Naive thymus-derived CD4-positive, alpha-beta T cell (primary cell): ENCODE measurements at regions of chr14 and their contacts with region 1.

Region 1: DNA sequence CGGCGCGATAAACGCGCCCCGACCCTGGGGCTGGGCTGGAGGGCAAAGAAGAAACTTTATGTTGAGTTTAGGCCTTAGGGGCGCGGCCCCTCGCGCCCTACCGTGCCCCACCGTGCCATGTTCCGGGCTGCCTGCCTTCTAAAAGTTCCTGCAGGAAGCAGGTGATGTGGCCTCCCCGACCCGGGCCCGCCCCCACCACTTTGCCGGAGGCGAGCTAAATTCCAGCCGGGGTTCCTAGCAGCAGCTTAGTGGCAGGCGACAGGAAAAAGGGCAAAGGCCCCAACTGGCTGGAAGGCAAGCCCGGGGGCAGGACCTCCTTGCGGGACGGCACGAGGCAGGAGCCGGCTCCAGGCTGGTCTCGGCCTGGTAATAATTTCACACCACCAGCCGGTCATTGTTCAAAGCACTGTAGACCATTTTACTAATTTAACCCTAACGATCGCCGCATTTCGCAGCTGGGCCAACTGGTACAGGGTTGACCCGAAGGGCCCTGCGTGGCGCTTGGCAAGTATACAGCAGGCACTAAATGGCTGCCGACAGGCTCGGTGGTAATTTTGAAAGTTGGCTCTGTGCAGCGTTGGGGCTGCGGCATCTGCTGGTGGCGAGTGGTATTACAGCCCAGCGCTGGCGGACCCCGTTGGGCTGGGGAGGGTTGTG is 895 bp upstream of the CCDC88C start:
- DNase-seq: peak; percentile 75 to 86 (median 82)
- ATAC-seq: peak; percentile 63
- H3K4me3 ChIP-seq: peak overlapping the region; percentile 52
- H3K4me3 Mint-ChIP-seq: peak overlapping the region; percentile 61 to 91 (median 84)
- H3K27ac ChIP-seq: peak overlapping the region; percentile 97
- H3K27ac Mint-ChIP-seq: peak overlapping the region; percentile 80 to 98 (median 91)
- H3K4me1 ChIP-seq: peaks cover 19 to 25% of the 10 kb centered on the region in 2 donors
- H3K4me1 Mint-ChIP-seq: peaks cover 22 to 42% (median 34%) of the 10 kb centered on the region in 7 donors
- H3K27me3 ChIP-seq: no peaks in the 10 kb centered on the region
- H3K27me3 Mint-ChIP-seq: peaks cover 0 to 7% (median 0%) of the 10 kb centered on the region in 5 donors

Region 2: GRCh38 chr14:91114079-91115065 is 304.1 kb before region 1 on chr14:
- CTCF ChIA-PET with region 1: no interaction called
- POLR2A ChIA-PET with region 1: interaction called, 4 read pairs
- intact Hi-C with region 1: loop called in 1 of 2 experiments (anchors 1 kb)
- DNase-seq: peak; percentile 25 to 75 (median 66)
- ATAC-seq: peak; percentile 84
- H3K4me3 ChIP-seq: peak overlapping the region; percentile 76
- H3K4me3 Mint-ChIP-seq: peak overlapping the region; percentile 84 to 99 (median 93)
- H3K27ac ChIP-seq: peak overlapping the region; percentile 87
- H3K27ac Mint-ChIP-seq: peak overlapping the region; percentile 88 to 97 (median 96)
- H3K4me1 ChIP-seq: peaks cover 54 to 55% of the 10 kb centered on the region in 2 donors
- H3K4me1 Mint-ChIP-seq: peaks cover 46 to 82% (median 73%) of the 10 kb centered on the region in 7 donors
- H3K27me3 ChIP-seq: no peaks in the 10 kb centered on the region
- H3K27me3 Mint-ChIP-seq: no peaks in the 10 kb centered on the region

Region 3: GRCh38 chr14:91244501-91244901 is 174.0 kb before region 1 on chr14 and contains the start of gene GPR68:
- CTCF ChIA-PET with region 1: interaction called, 4 read pairs
- POLR2A ChIA-PET with region 1: interaction called, 3 read pairs
- intact Hi-C with region 1: loop called (anchors 1 to 2 kb)
- DNase-seq: peak in 2 of 9 donors; percentile 25 to 39
- ATAC-seq: no peak
- H3K4me3 ChIP-seq: peak within 1 kb of the TSS; percentile 59
- H3K4me3 Mint-ChIP-seq: peak within 1 kb of the TSS; percentile 72 to 91 (median 82)
- H3K27ac ChIP-seq: peak within 1 kb of the TSS; percentile 89
- H3K27ac Mint-ChIP-seq: peak within 1 kb of the TSS; percentile 79 to 100 (median 98)
- H3K4me1 ChIP-seq: peaks cover 51 to 63% of the 10 kb centered on the region in 2 donors
- H3K4me1 Mint-ChIP-seq: peaks cover 56 to 96% (median 89%) of the 10 kb centered on the region in 7 donors
- H3K27me3 ChIP-seq: no peaks in the 10 kb centered on the region
- H3K27me3 Mint-ChIP-seq: no peaks in the 10 kb centered on the region
- total RNA-seq, gene GPR68: 0.86 to 38.6 (median 2.3) TPM

Region 4: DNA sequence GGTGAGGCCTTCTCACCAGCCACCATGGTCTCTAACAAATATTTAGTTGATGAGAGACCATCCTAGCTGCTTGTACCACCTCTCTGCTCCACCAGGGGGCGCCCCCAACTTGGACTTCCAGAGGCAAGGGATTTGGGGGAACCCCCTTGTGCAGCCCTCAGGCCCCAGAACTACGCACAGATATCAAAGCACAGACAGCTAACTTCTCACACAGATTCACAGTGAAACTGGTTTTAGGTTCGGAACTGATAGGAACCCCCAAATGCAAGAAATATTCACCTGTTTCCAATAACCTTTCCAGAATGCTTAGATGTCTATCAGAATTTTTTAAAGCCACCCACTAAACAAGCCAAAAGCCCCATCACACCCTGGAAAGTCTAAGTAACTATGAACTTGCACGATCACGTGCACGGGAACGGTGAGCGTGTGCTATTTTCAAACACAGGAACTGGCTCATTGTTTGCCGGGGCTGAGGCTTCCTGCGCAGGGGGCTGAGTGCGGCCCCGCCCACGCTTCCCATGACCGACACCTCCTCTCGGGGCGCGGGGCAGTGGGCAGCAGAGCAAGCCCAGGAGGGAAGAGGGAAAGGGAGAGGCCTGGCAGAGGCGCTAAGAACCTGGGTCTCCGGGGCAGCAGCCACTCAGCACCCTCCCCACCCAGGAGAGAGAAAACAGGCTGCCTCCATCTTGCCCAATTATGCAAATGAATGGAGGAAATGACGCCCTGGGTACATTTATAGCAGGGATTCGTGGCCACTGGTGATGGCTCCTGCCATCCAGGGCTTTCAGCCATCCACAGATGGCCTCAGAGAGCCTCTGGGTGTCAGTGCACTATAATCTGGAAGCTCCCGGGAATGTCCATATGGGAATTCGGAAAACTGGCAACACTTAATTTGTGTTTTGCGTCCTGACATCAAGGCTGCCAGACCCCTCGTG is 94.6 kb before region 1 on chr14:
- CTCF ChIA-PET with region 1: interaction called, 101 read pairs
- POLR2A ChIA-PET with region 1: interaction called, 173 read pairs
- intact Hi-C with region 1: loop called (anchors 1 kb)
- DNase-seq: peak; percentile 90 to 95 (median 92)
- ATAC-seq: peak; percentile 94
- H3K4me3 ChIP-seq: peak overlapping the region; percentile 39
- H3K4me3 Mint-ChIP-seq: peak overlapping the region; percentile 77 to 98 (median 84)
- H3K27ac ChIP-seq: peak overlapping the region; percentile 81
- H3K27ac Mint-ChIP-seq: peak overlapping the region; percentile 94 to 100 (median 99)
- H3K4me1 ChIP-seq: peaks cover 48 to 60% of the 10 kb centered on the region in 2 donors
- H3K4me1 Mint-ChIP-seq: peaks cover 52 to 91% (median 82%) of the 10 kb centered on the region in 7 donors
- H3K27me3 ChIP-seq: no peaks in the 10 kb centered on the region
- H3K27me3 Mint-ChIP-seq: no peaks in the 10 kb centered on the region

Region 5: DNA sequence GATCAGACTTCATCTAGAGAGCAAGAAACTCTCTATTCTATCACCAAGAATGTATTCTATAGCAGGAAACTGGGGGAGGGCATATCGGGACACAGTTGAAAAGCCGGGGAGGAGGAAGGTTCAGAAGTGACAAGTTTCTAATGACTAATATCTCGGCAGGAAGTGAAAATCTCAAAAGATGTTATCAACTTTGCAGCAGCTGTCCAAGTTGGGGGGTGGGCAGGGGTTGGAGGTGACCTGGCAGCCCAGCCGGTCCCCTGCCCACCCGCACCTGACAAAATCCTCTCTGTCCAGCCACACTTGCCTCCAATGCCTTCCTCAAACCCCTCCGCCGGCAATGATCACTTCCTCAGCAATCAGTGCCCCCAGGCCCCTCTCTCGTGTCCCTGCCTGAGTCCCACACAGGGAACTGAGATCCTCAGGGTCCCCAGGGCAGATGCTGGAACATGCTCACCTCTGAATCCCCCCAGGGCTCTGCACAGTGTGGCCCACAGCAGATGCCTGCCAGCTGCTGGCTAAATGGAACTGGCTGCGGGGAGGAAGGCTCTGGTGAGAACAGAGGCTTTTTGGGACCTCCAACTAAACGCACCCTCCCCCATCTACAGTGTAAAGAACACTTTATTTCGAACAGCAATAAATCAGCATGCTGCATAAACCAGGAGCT is 44.8 kb before region 1 on chr14:
- CTCF ChIA-PET with region 1: interaction called, 7 read pairs
- POLR2A ChIA-PET with region 1: interaction called, 90 read pairs
- intact Hi-C with region 1: loop called (anchors 1 kb)
- DNase-seq: peak in 6 of 9 donors; percentile 42 to 61 (median 56)
- ATAC-seq: peak; percentile 59
- H3K4me3 ChIP-seq: peak overlapping the region; percentile 61
- H3K4me3 Mint-ChIP-seq: peak overlapping the region; percentile 79 to 89 (median 86)
- H3K27ac ChIP-seq: peak overlapping the region; percentile 72
- H3K27ac Mint-ChIP-seq: peak overlapping the region; percentile 89 to 99 (median 97)
- H3K4me1 ChIP-seq: peaks cover 94 to 98% of the 10 kb centered on the region in 2 donors
- H3K4me1 Mint-ChIP-seq: peaks cover 84 to 100% (median 98%) of the 10 kb centered on the region in 7 donors
- H3K27me3 ChIP-seq: no peaks in the 10 kb centered on the region
- H3K27me3 Mint-ChIP-seq: no peaks in the 10 kb centered on the region

Region 6: DNA sequence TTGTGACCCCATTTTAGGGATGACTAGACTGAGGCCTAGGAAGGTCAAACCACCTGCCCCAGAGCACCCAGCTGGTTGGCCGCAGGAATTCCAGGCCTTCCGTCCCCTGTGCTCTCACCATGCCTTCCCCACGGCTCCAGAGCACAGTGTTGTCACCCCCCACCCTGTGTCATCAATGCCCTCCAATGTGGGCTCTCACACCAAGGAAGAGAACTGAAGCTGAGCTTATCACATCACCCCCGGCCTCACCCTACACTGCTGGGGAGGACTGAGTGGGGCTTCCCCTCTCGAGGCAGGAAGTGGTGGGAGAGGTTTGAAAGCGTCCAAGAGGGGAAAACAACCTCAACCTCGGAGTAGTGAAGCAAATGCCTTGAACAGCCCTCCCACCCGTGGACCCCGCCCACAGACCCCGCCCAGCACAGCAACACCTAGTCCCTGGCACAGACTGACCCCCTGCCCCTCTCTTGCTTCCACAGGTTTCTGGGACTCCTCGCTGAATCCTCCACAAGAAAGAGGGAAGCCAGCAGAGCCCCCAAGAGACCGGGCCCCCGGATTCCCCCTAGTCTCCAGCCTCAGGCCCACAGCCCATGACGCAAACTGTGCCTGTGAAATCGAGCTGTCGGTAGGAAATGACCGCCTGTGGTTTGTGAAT is 1232.7 kb after region 1 on chr14:
- CTCF ChIA-PET with region 1: no interaction called
- POLR2A ChIA-PET with region 1: no interaction called
- intact Hi-C with region 1: loop called in 1 of 2 experiments (anchors 10 kb)
- DNase-seq: peak; percentile 50 to 91 (median 87)
- ATAC-seq: peak; percentile 89
- H3K4me3 ChIP-seq: peak overlapping the region; percentile 82
- H3K4me3 Mint-ChIP-seq: peak overlapping the region; percentile 99 to 100 (median 100)
- H3K27ac ChIP-seq: peak overlapping the region; percentile 90
- H3K27ac Mint-ChIP-seq: peak overlapping the region; percentile 94 to 100 (median 99)
- H3K4me1 ChIP-seq: peaks cover 57 to 58% of the 10 kb centered on the region in 2 donors
- H3K4me1 Mint-ChIP-seq: peaks cover 65 to 82% (median 70%) of the 10 kb centered on the region in 7 donors
- H3K27me3 ChIP-seq: no peaks in the 10 kb centered on the region
- H3K27me3 Mint-ChIP-seq: no peaks in the 10 kb centered on the region